Transverse colon (tissue), 4 donors: ENCODE measurements at regions of chr3 and their contacts with region 1.

Region 1: DNA sequence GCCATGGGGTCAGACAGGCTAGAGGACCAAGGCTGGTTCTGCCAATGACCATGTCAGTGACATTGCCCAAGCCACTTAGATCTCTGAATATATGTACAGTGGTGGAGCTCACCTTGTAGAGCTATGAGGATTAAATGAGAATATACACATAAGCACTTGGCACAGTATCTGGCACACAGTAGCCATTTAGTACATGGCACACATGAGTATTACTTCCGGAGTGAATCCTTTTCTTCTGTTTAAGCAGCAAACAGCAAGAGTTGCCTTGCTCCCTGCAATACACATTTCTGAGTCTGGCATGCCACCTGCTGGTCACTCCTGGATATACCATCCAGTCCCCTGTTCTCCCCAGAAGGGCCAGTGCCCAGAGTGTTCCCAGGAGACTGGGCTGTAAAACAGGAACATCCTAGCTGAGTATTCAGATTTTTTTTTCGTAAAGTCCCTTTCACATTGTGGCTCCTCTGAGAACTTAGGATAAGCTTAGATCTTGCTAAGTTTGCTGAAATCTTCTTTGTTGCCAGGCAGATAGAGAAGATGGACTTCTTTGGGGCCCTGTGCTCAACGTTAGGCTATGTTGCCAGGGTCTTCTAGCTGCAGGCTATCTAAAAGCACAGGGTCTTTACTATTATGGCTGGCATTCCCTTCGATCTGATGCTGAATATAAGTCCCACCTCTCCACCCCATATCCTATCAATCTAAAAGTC is 203.4 kb downstream of the ADAMTS9 start:
- DNase-seq: peak; percentile 78
- H3K4me3 ChIP-seq: no peak overlapping the region
- H3K27ac ChIP-seq: no peak overlapping the region
- H3K4me1 ChIP-seq: peaks cover 0 to 8% (median 5%) of the 10 kb centered on the region in 4 donors
- H3K27me3 ChIP-seq: no peaks in the 10 kb centered on the region
- CTCF ChIP-seq: peak; percentile 78 to 85 (median 81)
- EP300 ChIP-seq: no peak
- POLR2A ChIP-seq: no peak

Region 2: GRCh38 chr3:64023187-64023848 is 461.1 kb before region 1 on chr3 and contains the start of gene PSMD6:
- in situ Hi-C with region 1: loop called in 1 of 4 experiments (anchors 10 kb)
- intact Hi-C with region 1: no loop called
- DNase-seq: peak; percentile 89
- H3K4me3 ChIP-seq: peak within 1 kb of the TSS; percentile 69 to 92 (median 81)
- H3K27ac ChIP-seq: peak within 1 kb of the TSS; percentile 80 to 86 (median 84)
- H3K4me1 ChIP-seq: peaks cover 11 to 31% (median 19%) of the 10 kb centered on the region in 4 donors
- H3K27me3 ChIP-seq: no peaks in the 10 kb centered on the region
- CTCF ChIP-seq: peak; percentile 98 to 100 (median 99)
- EP300 ChIP-seq: no peak
- POLR2A ChIP-seq: peak; percentile 56
- total RNA-seq, gene PSMD6: 18.3 to 66.6 (median 47.8) TPM